GM12878 (cell line): ENCODE measurements at regions of chr14 and their contacts with region 1.

Region 1: DNA sequence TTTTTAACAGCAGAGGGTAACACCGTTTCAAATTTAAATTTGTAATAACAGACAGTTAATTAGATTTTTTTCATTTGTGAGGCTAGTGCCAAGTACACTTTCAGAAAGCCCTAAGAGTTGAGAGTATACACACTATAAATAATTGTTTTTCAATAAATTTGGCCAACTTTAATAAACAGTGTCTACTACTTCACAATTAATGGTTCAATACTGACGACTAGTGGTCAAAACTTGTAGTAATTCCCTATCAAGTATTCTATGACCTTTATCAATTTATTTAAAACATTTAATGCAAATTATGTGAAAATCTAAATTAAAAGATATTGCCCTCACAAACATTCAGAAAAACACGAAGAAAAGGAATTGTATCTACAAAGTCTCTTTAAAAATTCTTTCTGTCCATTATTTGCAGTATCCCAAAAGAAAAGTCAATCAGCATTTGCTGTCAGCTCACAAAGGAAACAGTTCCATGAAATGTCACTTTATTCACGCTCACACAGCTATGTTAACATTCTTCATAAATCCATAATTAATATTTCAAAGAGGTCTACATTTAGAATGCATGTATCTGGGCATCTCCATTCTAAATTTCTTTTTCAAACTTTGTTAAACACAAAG is 91.2 kb downstream of the CEP128 start:
- DNase-seq: no peak
- ATAC-seq: peak; percentile 73
- H3K4me3 ChIP-seq: no peak overlapping the region
- H3K27ac ChIP-seq: no peak overlapping the region
- H3K4me1 ChIP-seq: no peaks in the 10 kb centered on the region
- H3K27me3 ChIP-seq: no peaks in the 10 kb centered on the region
- CTCF ChIP-seq: peak; percentile 30 to 60 (median 33); a peak in 2 of 6 replicates
- EP300 ChIP-seq: no peak
- POLR2A ChIP-seq: no peak
- RAD21 ChIP-seq: peak; percentile 71

Region 2: GRCh38 chr14:78967110-78967809 is 1883.0 kb before region 1 on chr14:
- CTCF ChIA-PET with region 1: interaction called, 7 read pairs
- POLR2A ChIA-PET with region 1: no interaction called
- RAD21 ChIA-PET with region 1: no interaction called
- SMC1A ChIA-PET with region 1: no interaction called
- in situ Hi-C with region 1: loop called (anchors 10 kb)
- intact Hi-C with region 1: loop called (anchors 5 kb)
- DNase-seq: no peak
- ATAC-seq: no peak
- H3K4me3 ChIP-seq: no peak overlapping the region
- H3K27ac ChIP-seq: no peak overlapping the region
- H3K4me1 ChIP-seq: no peaks in the 10 kb centered on the region
- H3K27me3 ChIP-seq: no peaks in the 10 kb centered on the region
- CTCF ChIP-seq: no peak
- EP300 ChIP-seq: no peak
- POLR2A ChIP-seq: no peak
- RAD21 ChIP-seq: no peak

Region 3: GRCh38 chr14:80202888-80203562 is 647.3 kb before region 1 on chr14:
- CTCF ChIA-PET with region 1: interaction called, 37 read pairs
- POLR2A ChIA-PET with region 1: no interaction called
- RAD21 ChIA-PET with region 1: interaction called, 4 read pairs
- SMC1A ChIA-PET with region 1: interaction called, 7 read pairs
- in situ Hi-C with region 1: loop called (anchors 5 kb)
- intact Hi-C with region 1: no loop called
- DNase-seq: no peak
- ATAC-seq: peak; percentile 71
- H3K4me3 ChIP-seq: no peak overlapping the region
- H3K27ac ChIP-seq: no peak overlapping the region
- H3K4me1 ChIP-seq: no peaks in the 10 kb centered on the region
- H3K27me3 ChIP-seq: no peaks in the 10 kb centered on the region
- CTCF ChIP-seq: peak; percentile 56 to 79 (median 65)
- EP300 ChIP-seq: no peak
- POLR2A ChIP-seq: no peak
- RAD21 ChIP-seq: peak; percentile 41

Region 4: GRCh38 chr14:80587075-80587724 is 263.1 kb before region 1 on chr14:
- CTCF ChIA-PET with region 1: interaction called, 3 read pairs
- POLR2A ChIA-PET with region 1: no interaction called
- RAD21 ChIA-PET with region 1: no interaction called
- SMC1A ChIA-PET with region 1: interaction called, 4 read pairs
- in situ Hi-C with region 1: no loop called
- intact Hi-C with region 1: loop called (anchors 5 kb)
- DNase-seq: peak; percentile 89
- ATAC-seq: peak; percentile 97
- H3K4me3 ChIP-seq: no peak overlapping the region
- H3K27ac ChIP-seq: no peak overlapping the region
- H3K4me1 ChIP-seq: peaks cover 9% of the 10 kb centered on the region; the same call in 1 of the 2 replicates
- H3K27me3 ChIP-seq: no peaks in the 10 kb centered on the region
- CTCF ChIP-seq: peak; percentile 36 to 58 (median 46); a peak in 5 of 6 replicates
- EP300 ChIP-seq: peak; percentile 36 to 71; a peak in 2 of 4 replicates
- POLR2A ChIP-seq: no peak
- RAD21 ChIP-seq: peak; percentile 44

Region 5: DNA sequence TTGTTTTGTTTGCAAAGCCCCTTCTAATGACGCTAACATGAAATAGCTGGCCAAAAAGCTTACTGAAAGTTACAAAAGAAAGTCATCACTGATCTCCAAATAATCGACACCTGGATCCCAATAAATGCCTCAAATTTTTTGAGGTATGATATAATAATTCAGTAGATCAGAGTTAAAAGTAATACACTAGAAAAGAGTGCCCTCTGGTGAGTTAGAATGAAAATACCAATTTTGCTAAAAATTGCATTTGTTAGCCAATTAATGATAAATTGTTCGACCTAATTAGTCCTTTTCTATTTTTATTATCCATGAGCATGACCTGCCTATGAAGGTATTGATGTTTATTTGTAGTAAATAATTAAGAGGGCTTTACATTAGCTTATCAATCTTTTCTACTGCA is 12.7 kb after region 1 on chr14:
- CTCF ChIA-PET with region 1: interaction called, 23 read pairs
- POLR2A ChIA-PET with region 1: no interaction called
- RAD21 ChIA-PET with region 1: interaction called, 3 read pairs
- SMC1A ChIA-PET with region 1: no interaction called
- in situ Hi-C with region 1: no loop called
- intact Hi-C with region 1: no loop called
- DNase-seq: no peak
- ATAC-seq: no peak
- H3K4me3 ChIP-seq: no peak overlapping the region
- H3K27ac ChIP-seq: no peak overlapping the region
- H3K4me1 ChIP-seq: no peaks in the 10 kb centered on the region
- H3K27me3 ChIP-seq: no peaks in the 10 kb centered on the region
- CTCF ChIP-seq: peak in 1 of 3 experiments; percentile 2; a peak in 1 of 6 replicates
- EP300 ChIP-seq: no peak
- POLR2A ChIP-seq: no peak
- RAD21 ChIP-seq: no peak